Endothelial cell of umbilical vein (primary cell): ENCODE measurements at regions of chr3 and their contacts with region 1.

Region 1: GRCh38 chr3:27533718-27534573 is 49.8 kb upstream of the SLC4A7 start:
- DNase-seq: peak; percentile 97
- H3K4me3 ChIP-seq: no peak overlapping the region
- H3K27ac ChIP-seq: peak overlapping the region; percentile 86
- H3K4me1 ChIP-seq: peaks cover 34% of the 10 kb centered on the region
- H3K27me3 ChIP-seq: no peaks in the 10 kb centered on the region
- CTCF ChIP-seq: peak; percentile 39 to 45
- POLR2A ChIP-seq: no peak

Region 2: GRCh38 chr3:27458929-27459328 is 75.0 kb before region 1 on chr3:
- CTCF ChIA-PET with region 1: no interaction called
- POLR2A ChIA-PET with region 1: no interaction called
- dilution Hi-C with region 1: no loop called
- intact Hi-C with region 1: no loop called
- DNase-seq: no peak
- H3K4me3 ChIP-seq: no peak overlapping the region
- H3K27ac ChIP-seq: no peak overlapping the region
- H3K4me1 ChIP-seq: no peaks in the 10 kb centered on the region
- H3K27me3 ChIP-seq: no peaks in the 10 kb centered on the region
- CTCF ChIP-seq: no peak
- POLR2A ChIP-seq: no peak

Region 3: DNA sequence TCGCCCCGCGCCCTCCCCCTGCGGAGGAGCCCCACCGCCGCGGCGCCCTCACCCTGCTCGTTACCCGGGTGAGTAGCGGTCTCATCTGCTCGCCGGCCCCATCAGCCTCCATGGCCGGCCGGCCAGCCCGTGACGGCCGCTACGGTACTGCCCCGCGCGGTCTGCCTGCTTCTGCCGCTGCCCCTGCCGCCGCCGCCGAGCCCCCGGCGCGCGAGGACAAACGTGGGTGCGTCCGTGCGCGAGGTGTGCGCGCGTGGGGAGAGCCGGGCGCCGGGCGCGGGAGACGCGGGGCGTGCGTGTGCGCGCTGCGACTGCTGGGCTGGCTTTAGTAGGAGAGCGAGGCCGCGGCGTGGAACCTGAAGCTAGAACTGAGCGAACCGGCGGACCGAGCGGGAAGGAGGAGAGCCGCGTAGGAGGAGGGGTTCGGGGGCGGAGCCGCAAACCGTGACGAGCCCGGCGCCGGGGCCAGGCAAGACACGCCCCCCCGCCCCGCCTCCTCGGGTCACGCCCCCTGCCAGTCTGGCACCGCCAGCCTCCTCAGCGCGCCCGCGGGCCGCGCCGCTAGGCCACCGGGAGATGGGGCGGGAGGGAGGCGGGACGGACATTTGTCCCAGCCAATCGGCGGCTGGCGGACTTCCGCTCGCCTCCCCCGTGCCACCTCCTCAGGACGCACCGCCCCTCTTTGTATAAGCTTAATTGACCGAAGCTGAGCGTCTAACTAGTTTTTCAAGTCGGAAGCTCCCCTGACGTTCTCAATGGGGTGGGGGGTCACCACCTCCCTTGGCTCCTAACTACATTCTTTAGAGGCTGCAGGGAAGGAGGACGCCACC is 49.7 kb before region 1 on chr3 and contains the start of gene SLC4A7:
- CTCF ChIA-PET with region 1: interaction called, 3 read pairs
- POLR2A ChIA-PET with region 1: interaction called, 7 read pairs
- dilution Hi-C with region 1: no loop called
- intact Hi-C with region 1: loop called (anchors 1 kb)
- DNase-seq: peak; percentile 96
- H3K4me3 ChIP-seq: peak within 1 kb of the TSS; percentile 79 to 93 (median 88)
- H3K27ac ChIP-seq: peak within 1 kb of the TSS; percentile 67
- H3K4me1 ChIP-seq: peaks cover 29% of the 10 kb centered on the region
- H3K27me3 ChIP-seq: no peaks in the 10 kb centered on the region
- CTCF ChIP-seq: no peak
- POLR2A ChIP-seq: peak; percentile 96
- total RNA-seq, gene SLC4A7: 50.9 and 58.6 TPM in 2 replicates

Region 4: GRCh38 chr3:27559835-27560234 is 25.9 kb after region 1 on chr3:
- CTCF ChIA-PET with region 1: no interaction called
- POLR2A ChIA-PET with region 1: no interaction called
- dilution Hi-C with region 1: no loop called
- intact Hi-C with region 1: loop called (anchors 1 kb)
- DNase-seq: peak; percentile 99
- H3K4me3 ChIP-seq: no peak overlapping the region
- H3K27ac ChIP-seq: peak overlapping the region; percentile 85
- H3K4me1 ChIP-seq: peaks cover 18% of the 10 kb centered on the region
- H3K27me3 ChIP-seq: no peaks in the 10 kb centered on the region
- CTCF ChIP-seq: no peak
- POLR2A ChIP-seq: peak; percentile 27

Region 5: DNA sequence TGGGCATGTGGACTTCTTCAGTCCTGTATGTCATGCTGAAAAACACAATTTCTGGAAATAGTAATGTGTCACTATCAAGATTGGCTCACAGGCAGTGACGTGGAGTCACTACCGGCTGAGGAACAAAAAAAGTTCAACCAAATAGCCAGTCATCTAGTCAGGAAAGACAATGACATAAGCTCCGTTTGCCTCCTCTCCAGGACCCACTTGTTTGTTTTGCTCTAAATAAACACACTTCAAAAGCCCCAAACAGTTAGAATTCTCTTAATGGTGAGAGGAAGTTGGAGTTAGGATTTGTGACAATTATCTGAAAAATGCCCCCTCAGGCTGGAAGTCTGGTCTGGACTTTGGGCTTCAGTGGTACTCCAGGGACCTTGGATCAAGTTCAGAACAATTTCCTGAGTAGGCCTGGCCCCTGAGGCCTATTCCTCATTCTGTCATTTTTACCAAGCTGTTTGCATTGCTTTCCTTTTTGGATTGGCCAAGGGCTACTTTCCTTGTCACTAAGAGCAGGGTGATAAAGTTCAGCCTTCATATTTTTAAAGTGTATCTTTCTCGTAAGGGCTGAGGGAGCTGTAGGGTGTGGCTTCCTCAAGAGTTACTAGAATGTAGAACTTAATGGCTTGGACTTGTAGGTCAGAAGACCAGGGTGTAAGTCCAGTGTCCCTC is 89.3 kb after region 1 on chr3:
- CTCF ChIA-PET with region 1: no interaction called
- POLR2A ChIA-PET with region 1: no interaction called
- dilution Hi-C with region 1: no loop called
- intact Hi-C with region 1: loop called (anchors 1 kb)
- DNase-seq: peak; percentile 74
- H3K4me3 ChIP-seq: no peak overlapping the region
- H3K27ac ChIP-seq: peak overlapping the region; percentile 94
- H3K4me1 ChIP-seq: peaks cover 40% of the 10 kb centered on the region
- H3K27me3 ChIP-seq: no peaks in the 10 kb centered on the region
- CTCF ChIP-seq: no peak
- POLR2A ChIP-seq: no peak

Region 6: GRCh38 chr3:27659279-27660021 is 125.5 kb after region 1 on chr3:
- CTCF ChIA-PET with region 1: interaction called, 4 read pairs
- POLR2A ChIA-PET with region 1: no interaction called
- dilution Hi-C with region 1: no loop called
- intact Hi-C with region 1: loop called (anchors 1 kb)
- DNase-seq: peak; percentile 55
- H3K4me3 ChIP-seq: no peak overlapping the region
- H3K27ac ChIP-seq: no peak overlapping the region
- H3K4me1 ChIP-seq: peaks cover 13% of the 10 kb centered on the region
- H3K27me3 ChIP-seq: no peaks in the 10 kb centered on the region
- CTCF ChIP-seq: peak; percentile 74 to 91
- POLR2A ChIP-seq: no peak

Region 7: GRCh38 chr3:28612232-28612631 is 1078.3 kb after region 1 on chr3:
- CTCF ChIA-PET with region 1: no interaction called
- POLR2A ChIA-PET with region 1: no interaction called
- dilution Hi-C with region 1: no loop called
- intact Hi-C with region 1: no loop called
- DNase-seq: no peak
- H3K4me3 ChIP-seq: no peak overlapping the region
- H3K27ac ChIP-seq: no peak overlapping the region
- H3K4me1 ChIP-seq: no peaks in the 10 kb centered on the region
- H3K27me3 ChIP-seq: no peaks in the 10 kb centered on the region
- CTCF ChIP-seq: no peak
- POLR2A ChIP-seq: no peak